ENCODE measurements at regions of chr1 and their contacts with region 1.

Region 1: GRCh38 chr1:151934048-151934493 is 24.8 kb upstream of the THEM4 start:
- DNase-seq: peak; percentile 58
- H3K4me3 Mint-ChIP-seq: no peak overlapping the region
- H3K27ac Mint-ChIP-seq: no peak overlapping the region
- H3K4me1 Mint-ChIP-seq: peaks cover 2% of the 10 kb centered on the region
- H3K27me3 Mint-ChIP-seq: no peaks in the 10 kb centered on the region

Region 2: GRCh38 chr1:151909150-151910149 is 24.6 kb before region 1 on chr1 and contains the start of gene THEM4:
- CTCF ChIA-PET with region 1: interaction called, 11 read pairs
- POLR2A ChIA-PET with region 1: interaction called, 3 read pairs
- intact Hi-C with region 1: no loop called
- DNase-seq: peak; percentile 98
- H3K4me3 Mint-ChIP-seq: peak within 1 kb of the TSS; percentile 78
- H3K27ac Mint-ChIP-seq: peak within 1 kb of the TSS; percentile 89
- H3K4me1 Mint-ChIP-seq: peaks cover 37% of the 10 kb centered on the region
- H3K27me3 Mint-ChIP-seq: no peaks in the 10 kb centered on the region
- total RNA-seq, gene THEM4: 19.6 to 24.9 TPM

Region 3: DNA sequence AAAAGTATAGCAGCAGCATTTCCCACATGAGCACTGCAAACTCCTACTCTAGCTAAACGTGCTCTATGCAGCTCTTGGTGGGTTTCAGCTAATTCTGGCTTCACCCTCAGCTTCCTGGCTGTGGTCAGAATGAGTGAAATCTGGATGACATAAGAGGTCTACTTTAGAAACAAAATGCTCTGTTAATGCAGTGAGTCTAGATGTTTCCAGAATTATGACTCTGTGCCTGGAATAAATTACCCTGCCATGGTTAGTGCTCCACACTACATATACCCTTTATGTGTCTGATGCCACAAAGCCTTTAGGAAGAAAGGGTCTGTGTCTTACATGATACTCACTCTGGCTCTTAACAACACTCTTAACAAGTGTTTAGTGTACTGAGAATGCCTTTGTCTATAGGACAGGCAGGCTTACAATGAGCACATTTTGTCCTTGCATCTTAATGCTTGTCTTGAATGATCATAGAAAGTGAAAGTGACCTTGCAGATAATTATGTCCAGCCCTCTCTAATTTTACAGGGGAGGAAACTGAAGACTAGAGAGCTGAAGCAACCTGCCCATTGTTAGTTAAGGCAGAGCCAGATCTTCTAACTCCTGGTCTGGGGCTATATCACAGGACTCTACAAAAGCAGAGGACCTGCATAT is 50.4 kb after region 1 on chr1:
- CTCF ChIA-PET with region 1: interaction called, 377 read pairs
- POLR2A ChIA-PET with region 1: no interaction called
- intact Hi-C with region 1: no loop called
- DNase-seq: peak; percentile 74
- H3K4me3 Mint-ChIP-seq: peak overlapping the region; percentile 24
- H3K27ac Mint-ChIP-seq: peak overlapping the region; percentile 85
- H3K4me1 Mint-ChIP-seq: peaks cover 67% of the 10 kb centered on the region
- H3K27me3 Mint-ChIP-seq: no peaks in the 10 kb centered on the region

Region 4: GRCh38 chr1:152013664-152014237 is 79.7 kb after region 1 on chr1:
- CTCF ChIA-PET with region 1: interaction called, 46 read pairs
- POLR2A ChIA-PET with region 1: no interaction called
- intact Hi-C with region 1: no loop called
- DNase-seq: peak; percentile 71
- H3K4me3 Mint-ChIP-seq: no peak overlapping the region
- H3K27ac Mint-ChIP-seq: no peak overlapping the region
- H3K4me1 Mint-ChIP-seq: peaks cover 4% of the 10 kb centered on the region
- H3K27me3 Mint-ChIP-seq: peaks cover 10% of the 10 kb centered on the region